OCI-LY7 (cell line): ENCODE measurements at regions of chr12 and their contacts with region 1.

Region 1: DNA sequence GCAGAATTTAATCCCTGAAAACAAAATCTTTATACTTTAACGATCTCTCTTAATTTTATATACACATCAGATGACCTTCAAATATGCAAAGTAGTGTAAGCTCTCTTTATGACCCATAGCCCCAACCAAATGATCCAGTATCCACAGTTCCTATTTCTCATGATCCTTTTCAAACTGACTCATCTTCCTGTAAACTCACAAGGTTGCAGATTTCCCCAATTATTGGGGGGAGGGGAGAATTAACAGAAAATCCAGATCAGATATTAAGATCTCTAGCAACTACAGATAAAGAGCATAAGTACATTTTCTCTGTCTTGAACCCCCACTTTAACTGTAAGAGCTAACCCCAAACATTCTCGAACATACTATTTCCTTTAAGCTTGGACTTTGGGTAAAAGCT is 12.5 kb downstream of the GNS start:
- DNase-seq: no peak
- H3K4me3 ChIP-seq: no peak overlapping the region
- H3K27ac ChIP-seq: no peak overlapping the region
- H3K4me1 ChIP-seq: no peaks in the 10 kb centered on the region
- CTCF ChIP-seq: no peak

Region 2: GRCh38 chr12:64733857-64734256 is 12.8 kb before region 1 on chr12:
- CTCF ChIA-PET with region 1: no interaction called
- POLR2A ChIA-PET with region 1: interaction called, 17 read pairs
- intact Hi-C with region 1: no loop called
- DNase-seq: no peak
- H3K4me3 ChIP-seq: no peak overlapping the region
- H3K27ac ChIP-seq: no peak overlapping the region
- H3K4me1 ChIP-seq: peaks cover 33% of the 10 kb centered on the region
- CTCF ChIP-seq: no peak